ENCODE measurements at regions of chr14 and their contacts with region 1.

Region 1: GRCh38 chr14:93736378-93737014 is 51.8 kb downstream of the PRIMA1 start:
- DNase-seq: no peak
- ATAC-seq: peak; percentile 63
- H3K4me3 ChIP-seq: no peak overlapping the region
- H3K27ac ChIP-seq: no peak overlapping the region
- H3K4me1 ChIP-seq: peaks cover 0 to 20% of the 10 kb centered on the region in 2 experiments; a peak in 1 of 4 replicates
- H3K27me3 ChIP-seq: no peaks in the 10 kb centered on the region
- CTCF ChIP-seq: peak in 2 of 3 experiments; percentile 46 to 47; a peak in 5 of 6 replicates
- POLR2A ChIP-seq: no peak
- RAD21 ChIP-seq: no peak

Region 2: GRCh38 chr14:93239869-93240677 is 496.4 kb before region 1 on chr14:
- CTCF ChIA-PET with region 1: no interaction called
- POLR2A ChIA-PET with region 1: no interaction called
- RAD21 ChIA-PET with region 1: no interaction called
- intact Hi-C with region 1: loop called (anchors 5 kb)
- DNase-seq: peak; percentile 57
- ATAC-seq: peak; percentile 96
- H3K4me3 ChIP-seq: peak overlapping the region in 1 of 2 experiments; percentile 48; a peak in 2 of 4 replicates
- H3K27ac ChIP-seq: peak overlapping the region; percentile 7; the same call in 1 of the 2 replicates
- H3K4me1 ChIP-seq: peaks cover 13 to 23% of the 10 kb centered on the region in 2 experiments
- H3K27me3 ChIP-seq: no peaks in the 10 kb centered on the region
- CTCF ChIP-seq: no peak
- POLR2A ChIP-seq: no peak
- RAD21 ChIP-seq: no peak

Region 3: DNA sequence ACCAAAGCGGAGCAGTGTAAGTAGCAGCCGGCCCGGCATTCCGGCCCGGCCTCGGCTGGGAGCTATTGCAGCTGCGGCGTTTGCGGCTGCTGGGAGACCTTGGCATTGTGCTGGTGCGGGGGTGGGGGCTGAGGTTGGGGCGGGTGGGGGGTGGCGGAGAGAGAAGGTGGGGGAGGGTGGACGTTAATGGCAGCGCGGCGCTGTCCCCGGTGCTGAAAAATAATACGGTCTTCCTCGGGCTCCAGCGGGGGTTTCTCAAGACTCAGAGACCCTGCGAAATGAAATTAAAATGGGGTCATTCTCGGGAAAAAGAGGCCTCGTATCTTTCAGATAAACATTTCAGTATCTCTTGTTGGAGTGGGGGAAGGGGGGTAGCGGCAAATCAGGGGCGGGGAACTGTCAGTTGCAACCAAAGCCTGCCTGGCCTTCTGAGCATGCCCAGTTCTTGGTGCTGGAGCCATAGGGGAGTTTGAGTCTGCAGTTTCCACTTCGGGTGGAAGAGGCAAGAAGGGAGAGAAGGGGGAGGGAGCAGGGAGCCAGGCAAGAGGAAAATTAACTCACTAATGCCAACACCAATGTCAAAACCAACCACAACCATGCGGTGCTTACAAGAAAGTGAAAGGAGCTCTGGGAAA is 305.3 kb before region 1 on chr14:
- CTCF ChIA-PET with region 1: no interaction called
- POLR2A ChIA-PET with region 1: no interaction called
- RAD21 ChIA-PET with region 1: no interaction called
- intact Hi-C with region 1: no loop called
- DNase-seq: no peak
- ATAC-seq: no peak
- H3K4me3 ChIP-seq: no peak overlapping the region
- H3K27ac ChIP-seq: no peak overlapping the region
- H3K4me1 ChIP-seq: no peaks in the 10 kb centered on the region
- H3K27me3 ChIP-seq: peaks cover 23% of the 10 kb centered on the region
- CTCF ChIP-seq: no peak
- POLR2A ChIP-seq: no peak
- RAD21 ChIP-seq: no peak

Region 4: GRCh38 chr14:93906341-93907329 is 170.1 kb after region 1 on chr14:
- CTCF ChIA-PET with region 1: no interaction called
- POLR2A ChIA-PET with region 1: no interaction called
- RAD21 ChIA-PET with region 1: no interaction called
- intact Hi-C with region 1: loop called (anchors 1 kb)
- DNase-seq: peak; percentile 63
- ATAC-seq: peak; percentile 94
- H3K4me3 ChIP-seq: no peak overlapping the region
- H3K27ac ChIP-seq: no peak overlapping the region
- H3K4me1 ChIP-seq: peaks cover 3 to 7% of the 10 kb centered on the region in 2 experiments; a peak in 3 of 4 replicates
- H3K27me3 ChIP-seq: no peaks in the 10 kb centered on the region
- CTCF ChIP-seq: peak; percentile 78 to 92 (median 89)
- POLR2A ChIP-seq: no peak
- RAD21 ChIP-seq: peak; percentile 80